ENCODE measurements at regions of chr10 and their contacts with region 1.

Region 1: DNA sequence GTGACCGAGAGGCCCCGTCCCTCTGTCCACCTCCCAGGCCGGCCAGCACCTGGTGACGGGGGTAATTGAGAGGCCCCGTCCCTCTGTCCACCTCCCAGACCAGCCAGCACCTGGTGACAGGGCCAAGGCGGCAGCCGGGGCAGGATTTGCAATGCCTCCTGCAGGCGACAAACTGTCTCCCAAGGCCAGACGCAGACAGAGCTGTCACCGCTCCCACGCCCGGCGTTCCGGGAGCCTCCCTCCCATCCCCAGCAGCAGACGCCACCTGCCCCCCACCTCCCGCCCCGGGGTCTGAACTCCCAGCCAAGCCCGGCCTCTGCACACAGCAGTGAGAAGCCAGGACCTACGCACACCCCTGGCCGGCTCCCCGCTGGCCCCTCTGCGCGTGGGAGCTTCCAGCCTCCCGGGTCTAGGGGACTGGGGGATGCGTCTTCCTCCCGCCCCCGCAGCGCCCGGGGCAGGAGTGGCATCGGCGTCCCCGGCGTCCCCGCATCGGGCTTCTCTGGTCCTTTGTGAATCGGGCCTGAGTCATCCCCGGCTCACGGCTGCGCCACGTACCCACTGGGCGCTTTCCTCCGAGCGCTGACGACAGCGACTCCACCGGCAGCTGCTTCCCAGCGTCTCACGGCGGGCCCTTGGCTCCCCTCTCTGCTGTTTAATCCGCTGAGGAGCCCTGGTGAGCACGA is 95.1 kb upstream of the DIP2C start:
- DNase-seq: peak; percentile 64
- ATAC-seq: peak; percentile 68
- H3K4me3 ChIP-seq: peak overlapping the region; percentile 50; the same call in 1 of the 2 replicates
- H3K27ac ChIP-seq: no peak overlapping the region
- H3K4me1 ChIP-seq: no peaks in the 10 kb centered on the region
- H3K27me3 ChIP-seq: no peaks in the 10 kb centered on the region
- CTCF ChIP-seq: 0 out of 2 replicates have a peak, but pooled peaks have one; percentile 27

Region 2: GRCh38 chr10:511101-511848 is 273.3 kb before region 1 on chr10:
- CTCF ChIA-PET with region 1: interaction called, 3 read pairs
- POLR2A ChIA-PET with region 1: no interaction called
- intact Hi-C with region 1: loop called (anchors 2 kb)
- DNase-seq: peak; percentile 82
- ATAC-seq: peak; percentile 98
- H3K4me3 ChIP-seq: no peak overlapping the region
- H3K27ac ChIP-seq: no peak overlapping the region
- H3K4me1 ChIP-seq: 0 out of 2 replicates have a peak, but pooled peaks cover 4% of the 10 kb centered on the region
- H3K27me3 ChIP-seq: no peaks in the 10 kb centered on the region
- CTCF ChIP-seq: peak; percentile 79

Region 3: GRCh38 chr10:615583-616152 is 168.9 kb before region 1 on chr10:
- CTCF ChIA-PET with region 1: no interaction called
- POLR2A ChIA-PET with region 1: no interaction called
- intact Hi-C with region 1: loop called (anchors 10 kb)
- DNase-seq: peak; percentile 82
- ATAC-seq: peak; percentile 87
- H3K4me3 ChIP-seq: peak overlapping the region; percentile 56
- H3K27ac ChIP-seq: peak overlapping the region; percentile 82
- H3K4me1 ChIP-seq: peaks cover 40% of the 10 kb centered on the region
- H3K27me3 ChIP-seq: no peaks in the 10 kb centered on the region
- CTCF ChIP-seq: no peak

Region 4: GRCh38 chr10:683448-684071 is 101.0 kb before region 1 on chr10:
- CTCF ChIA-PET with region 1: no interaction called
- POLR2A ChIA-PET with region 1: no interaction called
- intact Hi-C with region 1: loop called (anchors 5 kb)
- DNase-seq: peak; percentile 79
- ATAC-seq: peak; percentile 92
- H3K4me3 ChIP-seq: peak overlapping the region; percentile 62
- H3K27ac ChIP-seq: peak overlapping the region; percentile 90
- H3K4me1 ChIP-seq: peaks cover 17% of the 10 kb centered on the region
- H3K27me3 ChIP-seq: no peaks in the 10 kb centered on the region
- CTCF ChIP-seq: peak; percentile 27

Region 5: GRCh38 chr10:713199-713598 is 71.3 kb before region 1 on chr10:
- CTCF ChIA-PET with region 1: interaction called, 3 read pairs
- POLR2A ChIA-PET with region 1: no interaction called
- intact Hi-C with region 1: loop called (anchors 1 kb)
- DNase-seq: peak; percentile 30
- ATAC-seq: peak; percentile 79
- H3K4me3 ChIP-seq: no peak overlapping the region
- H3K27ac ChIP-seq: no peak overlapping the region
- H3K4me1 ChIP-seq: peaks cover 6% of the 10 kb centered on the region; the same call in 1 of the 2 replicates
- H3K27me3 ChIP-seq: no peaks in the 10 kb centered on the region
- CTCF ChIP-seq: no peak

Region 6: GRCh38 chr10:844552-844951 is 60.0 kb after region 1 on chr10:
- CTCF ChIA-PET with region 1: no interaction called
- POLR2A ChIA-PET with region 1: no interaction called
- intact Hi-C with region 1: no loop called
- DNase-seq: no peak
- ATAC-seq: no peak
- H3K4me3 ChIP-seq: no peak overlapping the region
- H3K27ac ChIP-seq: no peak overlapping the region
- H3K4me1 ChIP-seq: no peaks in the 10 kb centered on the region
- H3K27me3 ChIP-seq: no peaks in the 10 kb centered on the region
- CTCF ChIP-seq: no peak

Region 7: DNA sequence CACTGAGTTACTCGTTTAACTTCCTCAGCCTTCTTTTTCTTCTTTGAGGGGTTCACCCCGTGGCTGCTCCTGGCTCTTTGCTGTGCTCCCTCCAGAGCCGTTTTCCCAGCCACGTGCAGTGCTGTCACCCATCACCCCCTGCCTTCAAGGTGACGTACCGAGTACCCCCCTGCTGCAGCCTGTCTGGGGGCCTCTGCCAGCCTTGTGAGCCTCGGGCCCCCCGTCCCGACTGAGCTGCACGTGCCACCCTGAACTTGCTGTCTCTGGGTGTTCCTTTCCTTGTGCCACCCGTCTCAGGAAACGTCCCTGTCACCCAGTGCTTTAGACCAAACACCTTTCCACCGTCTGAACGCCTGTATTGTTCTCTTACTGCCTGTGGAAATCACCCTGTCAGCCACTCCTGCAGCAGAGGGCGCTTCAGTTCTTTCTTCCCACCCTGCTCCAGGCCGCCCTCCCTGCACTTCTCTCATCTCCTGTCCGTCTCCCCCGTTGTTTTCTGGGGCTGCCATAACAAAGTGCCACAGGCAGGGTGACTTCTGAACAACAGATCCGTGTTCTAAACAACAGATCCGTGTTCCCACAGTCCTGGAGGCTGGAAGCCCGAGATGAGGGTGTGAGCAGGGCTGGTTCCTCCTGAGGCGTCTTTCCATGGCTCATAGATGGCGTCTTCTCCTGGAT is 316.3 kb after region 1 on chr10:
- CTCF ChIA-PET with region 1: no interaction called
- POLR2A ChIA-PET with region 1: no interaction called
- intact Hi-C with region 1: no loop called
- DNase-seq: no peak
- ATAC-seq: no peak
- H3K4me3 ChIP-seq: no peak overlapping the region
- H3K27ac ChIP-seq: no peak overlapping the region
- H3K4me1 ChIP-seq: no peaks in the 10 kb centered on the region; the same call in 1 of the 2 replicates
- H3K27me3 ChIP-seq: no peaks in the 10 kb centered on the region
- CTCF ChIP-seq: no peak

Region 8: GRCh38 chr10:1403508-1404322 is 619.2 kb after region 1 on chr10:
- CTCF ChIA-PET with region 1: no interaction called
- POLR2A ChIA-PET with region 1: no interaction called
- intact Hi-C with region 1: no loop called
- DNase-seq: no peak
- ATAC-seq: no peak
- H3K4me3 ChIP-seq: no peak overlapping the region
- H3K27ac ChIP-seq: no peak overlapping the region
- H3K4me1 ChIP-seq: no peaks in the 10 kb centered on the region
- H3K27me3 ChIP-seq: no peaks in the 10 kb centered on the region
- CTCF ChIP-seq: no peak